ENCODE measurements at regions of chr4 and their contacts with region 1.

Region 1: GRCh38 chr4:74376888-74377483 is 12.0 kb downstream of the EREG start:
- DNase-seq: no peak
- H3K4me3 ChIP-seq: no peak overlapping the region
- H3K27ac ChIP-seq: no peak overlapping the region
- H3K4me1 ChIP-seq: no peaks in the 10 kb centered on the region
- H3K27me3 ChIP-seq: no peaks in the 10 kb centered on the region
- CTCF ChIP-seq: peak in 2 of 3 experiments; percentile 36 to 49; a peak in 2 of 4 replicates
- EP300 ChIP-seq: no peak
- POLR2A ChIP-seq: no peak
- RAD21 ChIP-seq: peak; percentile 71 to 73

Region 2: DNA sequence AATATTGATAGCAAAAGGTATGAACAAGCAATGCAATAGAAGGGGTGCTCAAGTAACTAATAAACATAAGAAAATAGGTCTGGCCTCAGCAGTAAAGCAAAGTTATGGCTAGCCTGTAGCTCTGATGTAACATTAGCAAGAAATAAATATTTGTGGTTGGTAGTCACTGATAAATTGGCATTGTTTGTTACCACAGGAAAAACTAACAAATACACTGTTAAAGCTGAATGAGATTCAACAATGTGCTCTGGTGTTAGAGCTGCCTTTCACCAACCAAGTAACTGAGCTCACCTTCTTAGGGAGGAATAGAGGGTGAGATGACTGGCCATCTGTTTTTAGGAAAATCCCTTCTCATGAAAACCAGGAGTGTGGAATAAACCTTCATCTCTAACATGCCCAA is 139.3 kb after region 1 on chr4:
- CTCF ChIA-PET with region 1: interaction called, 12 read pairs
- POLR2A ChIA-PET with region 1: no interaction called
- DNase-seq: no peak
- H3K4me3 ChIP-seq: no peak overlapping the region
- H3K27ac ChIP-seq: no peak overlapping the region
- H3K4me1 ChIP-seq: no peaks in the 10 kb centered on the region
- H3K27me3 ChIP-seq: no peaks in the 10 kb centered on the region
- CTCF ChIP-seq: no peak
- EP300 ChIP-seq: no peak
- POLR2A ChIP-seq: no peak
- RAD21 ChIP-seq: no peak

Region 3: GRCh38 chr4:74543231-74543670 is 166.3 kb after region 1 on chr4:
- CTCF ChIA-PET with region 1: interaction called, 10 read pairs
- POLR2A ChIA-PET with region 1: no interaction called
- DNase-seq: no peak
- H3K4me3 ChIP-seq: no peak overlapping the region
- H3K27ac ChIP-seq: no peak overlapping the region
- H3K4me1 ChIP-seq: peaks cover 0 to 8% (median 2%) of the 10 kb centered on the region in 4 experiments; a peak in 3 of 7 replicates
- H3K27me3 ChIP-seq: no peaks in the 10 kb centered on the region
- CTCF ChIP-seq: no peak
- EP300 ChIP-seq: no peak
- POLR2A ChIP-seq: no peak
- RAD21 ChIP-seq: no peak

Region 4: DNA sequence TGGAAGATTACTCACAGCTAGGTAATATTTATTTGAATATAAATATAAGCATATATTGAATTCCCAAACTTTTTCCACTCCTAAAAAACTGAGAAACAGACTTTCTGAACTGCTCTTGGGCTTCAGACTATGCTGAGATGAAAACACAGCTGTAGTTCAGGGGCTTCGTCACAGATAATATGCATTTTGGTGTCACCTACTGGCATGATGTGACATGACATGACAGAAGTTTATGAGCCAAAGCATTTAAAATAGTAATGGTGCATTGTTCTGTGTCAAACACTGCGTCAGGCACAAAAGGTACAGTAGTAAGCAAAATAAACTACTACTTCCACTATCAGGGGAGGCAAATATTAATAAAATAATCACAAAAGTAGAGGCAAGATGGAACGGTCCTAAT is 246.1 kb after region 1 on chr4:
- CTCF ChIA-PET with region 1: interaction called, 35 read pairs
- POLR2A ChIA-PET with region 1: no interaction called
- DNase-seq: no peak
- H3K4me3 ChIP-seq: no peak overlapping the region
- H3K27ac ChIP-seq: no peak overlapping the region
- H3K4me1 ChIP-seq: no peaks in the 10 kb centered on the region
- H3K27me3 ChIP-seq: peaks cover 0 to 1% (median 0%) of the 10 kb centered on the region in 4 experiments; a peak in 1 of 7 replicates
- CTCF ChIP-seq: peak in 2 of 3 experiments; percentile 57 to 63; a peak in 3 of 4 replicates
- EP300 ChIP-seq: no peak
- POLR2A ChIP-seq: no peak
- RAD21 ChIP-seq: peak; percentile 75 to 80

Region 5: GRCh38 chr4:74670583-74670982 is 293.6 kb after region 1 on chr4:
- CTCF ChIA-PET with region 1: interaction called, 73 read pairs
- POLR2A ChIA-PET with region 1: no interaction called
- DNase-seq: no peak
- H3K4me3 ChIP-seq: no peak overlapping the region
- H3K27ac ChIP-seq: no peak overlapping the region
- H3K4me1 ChIP-seq: peaks cover 0 to 5% (median 0%) of the 10 kb centered on the region in 4 experiments; a peak in 1 of 7 replicates
- H3K27me3 ChIP-seq: no peaks in the 10 kb centered on the region
- CTCF ChIP-seq: no peak
- EP300 ChIP-seq: no peak
- POLR2A ChIP-seq: no peak
- RAD21 ChIP-seq: no peak